ENCODE measurements at regions of chr12 and their contacts with region 1.

Region 1: DNA sequence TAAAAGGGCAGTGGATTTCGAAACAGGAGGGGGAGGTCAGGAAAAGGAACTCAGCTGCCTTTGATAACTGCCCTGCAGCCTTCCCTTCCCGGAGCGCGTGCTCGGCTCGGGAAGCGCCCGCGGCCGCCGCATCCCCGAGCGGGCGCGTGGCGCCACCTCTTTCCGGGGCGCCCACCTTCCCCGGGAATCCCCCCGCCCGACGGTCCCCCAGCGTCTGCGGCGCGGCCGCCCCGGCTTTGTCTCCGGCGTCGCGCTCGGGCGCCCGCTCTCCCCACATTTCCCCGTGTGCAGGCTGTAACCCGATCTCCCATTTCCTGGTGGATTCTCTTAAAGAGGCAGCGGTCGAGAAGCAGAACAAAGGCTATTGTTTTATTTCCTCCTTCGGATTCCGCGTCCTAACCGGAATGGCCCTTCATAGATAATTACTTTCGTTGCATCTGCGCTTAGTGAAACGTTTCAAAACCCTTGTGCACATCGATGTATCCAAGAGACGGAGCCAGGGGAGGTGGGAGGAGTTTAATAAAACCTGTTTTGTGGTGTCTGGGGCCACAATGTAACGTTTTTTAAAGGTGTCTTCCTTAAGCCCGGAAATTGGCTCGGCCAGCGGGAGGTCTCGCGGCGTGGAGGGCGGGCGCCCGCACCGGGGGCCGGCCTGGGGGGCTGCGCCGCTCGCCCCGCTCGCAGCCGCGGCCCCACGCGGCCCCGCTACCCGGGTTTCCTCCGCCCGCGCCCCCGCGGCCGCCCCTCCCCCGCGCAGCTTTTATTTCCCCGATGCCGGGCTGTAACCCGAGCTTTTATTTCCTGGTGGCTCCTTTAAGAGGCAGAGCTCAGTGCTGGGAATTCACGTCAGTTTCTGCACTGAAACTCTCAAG is at the start of gene ETV6:
- DNase-seq: peak; percentile 82 to 88
- ATAC-seq: peak; percentile 68
- H3K4me3 ChIP-seq: peak within 1 kb of the TSS; percentile 100
- H3K27ac ChIP-seq: peak within 1 kb of the TSS; percentile 98 to 100
- H3K4me1 ChIP-seq: peaks cover 0 to 2% of the 10 kb centered on the region in 2 donors
- H3K27me3 ChIP-seq: no peaks in the 10 kb centered on the region
- total RNA-seq, gene ETV6: 73.7 to 113 TPM

Region 2: DNA sequence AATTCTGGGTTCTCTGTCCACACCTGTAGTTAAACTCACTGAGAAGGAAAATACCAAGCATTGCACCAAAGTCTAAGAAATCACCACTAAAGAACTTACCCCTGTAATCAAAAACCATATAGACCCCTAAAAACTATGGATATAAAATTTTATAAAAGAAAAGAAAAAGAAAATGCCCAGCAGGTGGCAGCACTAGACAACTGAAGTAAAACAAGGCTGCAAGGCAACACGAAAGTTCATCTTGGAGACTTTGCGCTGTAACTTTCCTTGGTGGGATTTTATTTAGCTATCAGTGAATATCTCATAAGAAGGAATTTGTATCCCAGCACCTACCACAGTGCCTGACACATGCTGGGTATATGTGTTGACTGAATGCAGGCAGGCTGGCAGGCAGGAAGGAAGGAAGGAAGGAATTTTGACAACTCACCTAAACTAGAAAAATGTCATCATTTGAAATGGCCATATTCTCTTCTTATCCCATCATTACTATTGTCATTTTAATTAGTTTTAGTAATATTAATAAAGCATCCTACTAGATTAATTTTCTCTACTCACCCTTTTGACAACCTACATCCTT is 67.8 kb before region 1 on chr12:
- intact Hi-C with region 1: loop called in 1 of 2 experiments (anchors 1 kb)
- DNase-seq: peak in 1 of 2 donors; percentile 66
- ATAC-seq: peak; percentile 74
- H3K4me3 ChIP-seq: no peak overlapping the region
- H3K27ac ChIP-seq: no peak overlapping the region
- H3K4me1 ChIP-seq: peaks cover 0 to 9% of the 10 kb centered on the region in 2 donors
- H3K27me3 ChIP-seq: no peaks in the 10 kb centered on the region

Region 3: GRCh38 chr12:11755302-11755930 is 106.3 kb after region 1 on chr12:
- intact Hi-C with region 1: loop called in 1 of 2 experiments (anchors 2 kb)
- DNase-seq: no peak
- ATAC-seq: no peak
- H3K4me3 ChIP-seq: no peak overlapping the region
- H3K27ac ChIP-seq: peak overlapping the region; percentile 71 to 96
- H3K4me1 ChIP-seq: peaks cover 9 to 33% of the 10 kb centered on the region in 2 donors
- H3K27me3 ChIP-seq: no peaks in the 10 kb centered on the region

Region 4: DNA sequence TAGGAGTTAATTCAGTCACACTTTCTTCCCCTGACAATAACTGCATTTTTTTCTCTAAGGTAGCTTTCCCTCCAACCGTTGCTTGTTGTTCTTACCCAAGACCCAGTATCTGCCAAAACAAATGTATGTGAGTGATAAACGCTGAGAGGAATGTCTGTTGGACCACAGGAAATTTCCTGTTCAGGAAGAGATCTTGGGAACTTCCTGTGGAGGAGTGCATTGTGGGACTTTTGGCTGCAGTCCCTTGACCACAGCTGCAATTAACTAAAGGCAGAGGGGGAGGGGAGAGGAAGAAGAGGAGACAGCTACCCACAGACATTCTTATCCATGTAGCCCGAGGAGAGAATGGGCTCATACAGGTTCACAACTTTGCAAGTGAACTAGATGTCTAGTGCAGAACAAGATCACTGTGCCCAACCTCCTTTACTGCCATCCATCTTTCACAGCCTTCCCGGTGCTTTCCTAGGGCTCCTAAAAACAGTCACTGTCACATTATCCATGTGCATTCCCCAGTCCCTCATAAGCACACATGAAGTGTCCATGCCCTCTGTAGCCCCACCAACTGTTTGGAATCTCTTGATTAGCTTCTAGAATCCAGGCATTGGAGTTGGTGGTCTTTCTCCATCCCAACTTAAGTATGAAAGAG is 149.9 kb after region 1 on chr12:
- intact Hi-C with region 1: no loop called
- DNase-seq: no peak
- ATAC-seq: no peak
- H3K4me3 ChIP-seq: no peak overlapping the region
- H3K27ac ChIP-seq: peak overlapping the region; percentile 83 to 86
- H3K4me1 ChIP-seq: peaks cover 5 to 21% of the 10 kb centered on the region in 2 donors
- H3K27me3 ChIP-seq: no peaks in the 10 kb centered on the region

Region 5: DNA sequence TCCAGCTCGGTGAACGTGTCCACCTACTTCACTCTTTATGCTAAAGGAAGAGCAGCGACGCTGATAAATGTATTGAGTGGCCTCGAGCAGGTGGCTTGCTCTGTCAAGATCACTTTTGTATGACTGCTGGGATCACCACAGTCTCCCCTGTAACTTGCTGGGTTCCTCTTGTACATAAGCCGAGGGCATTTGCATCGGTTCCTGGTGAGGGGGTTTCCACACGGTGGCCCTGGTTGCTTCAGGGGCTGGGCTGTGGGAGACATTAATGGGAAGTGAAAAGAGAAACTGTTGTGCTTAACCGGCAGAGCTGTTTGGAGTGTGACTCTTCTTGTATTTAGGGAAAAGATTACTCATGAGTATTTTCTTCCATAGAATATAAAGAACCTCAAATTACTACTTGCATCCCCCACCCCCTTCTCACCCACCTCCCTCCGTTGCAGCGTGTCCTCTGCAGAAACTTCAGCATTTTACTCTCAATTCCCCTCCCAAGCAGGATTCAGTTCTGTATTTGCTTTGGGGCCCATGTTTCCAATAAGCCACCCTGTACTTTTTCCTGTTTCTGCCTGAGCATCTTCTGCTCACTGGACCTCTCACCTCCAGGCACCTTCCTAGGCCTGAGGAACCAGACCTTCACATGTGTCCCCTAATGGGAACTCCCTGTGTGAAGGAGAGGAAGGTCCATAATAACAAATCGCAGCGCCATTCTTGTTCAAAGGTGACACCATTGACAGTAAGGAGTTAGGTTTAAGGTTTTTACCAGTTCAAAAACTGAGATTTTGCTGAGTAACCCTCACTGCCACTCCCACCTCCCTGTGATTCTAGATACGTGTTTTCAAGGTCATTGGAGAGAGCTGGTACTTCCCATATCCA is 187.4 kb after region 1 on chr12:
- intact Hi-C with region 1: loop called in 1 of 2 experiments (anchors 5 kb)
- DNase-seq: peak in 1 of 2 donors; percentile 83
- ATAC-seq: no peak
- H3K4me3 ChIP-seq: no peak overlapping the region
- H3K27ac ChIP-seq: peak overlapping the region in 1 of 2 donors; percentile 8
- H3K4me1 ChIP-seq: peaks cover 11 to 27% of the 10 kb centered on the region in 2 donors
- H3K27me3 ChIP-seq: no peaks in the 10 kb centered on the region

Region 6: DNA sequence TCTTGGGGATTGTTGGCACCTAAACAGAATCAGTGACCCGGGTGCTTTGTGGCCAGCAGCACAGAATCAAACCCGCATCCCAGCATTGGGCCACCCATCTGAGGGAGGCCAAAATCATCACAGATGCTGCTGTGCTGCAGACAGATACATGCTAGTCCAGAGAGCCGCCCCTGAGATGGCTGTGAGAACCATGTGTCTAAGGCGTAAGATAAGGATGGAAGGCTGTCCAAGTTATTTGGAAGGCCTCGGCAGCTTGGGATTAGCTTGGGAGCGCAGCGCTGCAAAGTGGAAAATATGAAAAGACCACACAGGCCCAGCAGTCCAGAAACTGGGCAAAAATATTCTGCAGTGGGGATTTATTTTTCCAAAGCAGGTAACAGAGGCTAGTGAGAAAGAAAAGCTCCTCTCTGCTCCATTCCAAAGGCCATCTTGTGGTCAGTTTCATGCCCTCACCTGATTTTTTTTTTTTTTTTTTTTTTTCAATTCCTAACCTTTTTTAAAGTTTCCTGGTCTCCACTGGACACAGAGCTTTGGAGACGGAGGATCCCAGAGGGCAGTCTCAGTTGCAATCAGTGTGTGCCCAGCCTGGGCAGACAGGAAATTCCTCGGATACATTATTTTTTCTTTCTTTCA is 242.8 kb after region 1 on chr12:
- intact Hi-C with region 1: loop called (anchors 10 kb)
- DNase-seq: peak in 1 of 2 donors; percentile 55
- ATAC-seq: peak; percentile 75
- H3K4me3 ChIP-seq: no peak overlapping the region
- H3K27ac ChIP-seq: peak overlapping the region; percentile 19 to 63
- H3K4me1 ChIP-seq: peaks cover 0 to 9% of the 10 kb centered on the region in 2 donors
- H3K27me3 ChIP-seq: no peaks in the 10 kb centered on the region

Measured in aorta (tissue), 5 donors.